Spleen (tissue), 13 donors: ENCODE measurements at regions of chr4 and their contacts with region 1.

Region 1: DNA sequence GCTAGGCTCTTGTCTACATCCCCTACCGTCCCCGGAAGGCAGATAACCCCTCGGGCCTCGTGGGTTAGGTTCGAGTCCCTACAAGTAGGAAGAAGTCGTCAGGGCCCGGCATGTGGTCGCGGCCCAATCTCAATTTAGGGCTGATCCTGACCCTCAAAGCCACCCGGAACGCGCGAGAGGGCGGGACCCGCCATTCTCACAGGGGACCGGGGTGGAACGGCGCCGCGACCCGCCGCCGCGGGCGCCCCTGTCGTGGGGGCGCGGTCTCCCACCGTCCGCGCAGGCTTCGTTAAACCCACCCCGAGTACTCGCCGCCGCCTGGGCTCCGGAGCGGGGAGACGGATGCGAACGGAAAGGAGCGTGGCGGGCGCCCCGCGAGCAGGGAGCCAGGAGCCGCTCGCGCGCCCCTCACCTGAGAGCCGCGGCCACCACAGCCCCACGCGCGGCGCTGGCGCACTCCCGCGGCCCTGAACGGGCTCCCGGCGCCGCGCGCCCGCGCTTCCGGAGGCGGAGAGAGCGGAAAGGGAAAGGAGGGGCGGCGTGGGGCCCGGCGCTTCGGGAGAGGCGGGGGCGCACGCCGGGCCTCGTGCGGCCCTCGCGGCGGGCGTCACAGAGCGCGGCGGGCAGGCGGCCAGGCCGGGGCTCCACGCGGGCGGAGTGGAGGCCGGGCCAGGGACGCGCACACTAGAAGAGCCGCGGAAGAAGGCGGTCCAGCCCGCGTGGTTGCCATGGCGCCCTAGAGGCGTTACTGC is at the start of gene CFAP97:
- DNase-seq: peak; percentile 97
- H3K4me3 ChIP-seq: peak within 1 kb of the TSS; percentile 44 to 91 (median 66)
- H3K27ac ChIP-seq: peak within 1 kb of the TSS; percentile 92 to 99 (median 96)
- H3K4me1 ChIP-seq: peaks cover 9 to 55% (median 48%) of the 10 kb centered on the region in 6 donors
- H3K27me3 ChIP-seq: no peaks in the 10 kb centered on the region
- CTCF ChIP-seq: peak in 2 of 11 experiments; percentile 5
- POLR2A ChIP-seq: peak in 2 of 3 donors; percentile 12 to 70
- total RNA-seq, gene CFAP97: 34.0 to 48.6 (median 40.6) TPM

Region 2: DNA sequence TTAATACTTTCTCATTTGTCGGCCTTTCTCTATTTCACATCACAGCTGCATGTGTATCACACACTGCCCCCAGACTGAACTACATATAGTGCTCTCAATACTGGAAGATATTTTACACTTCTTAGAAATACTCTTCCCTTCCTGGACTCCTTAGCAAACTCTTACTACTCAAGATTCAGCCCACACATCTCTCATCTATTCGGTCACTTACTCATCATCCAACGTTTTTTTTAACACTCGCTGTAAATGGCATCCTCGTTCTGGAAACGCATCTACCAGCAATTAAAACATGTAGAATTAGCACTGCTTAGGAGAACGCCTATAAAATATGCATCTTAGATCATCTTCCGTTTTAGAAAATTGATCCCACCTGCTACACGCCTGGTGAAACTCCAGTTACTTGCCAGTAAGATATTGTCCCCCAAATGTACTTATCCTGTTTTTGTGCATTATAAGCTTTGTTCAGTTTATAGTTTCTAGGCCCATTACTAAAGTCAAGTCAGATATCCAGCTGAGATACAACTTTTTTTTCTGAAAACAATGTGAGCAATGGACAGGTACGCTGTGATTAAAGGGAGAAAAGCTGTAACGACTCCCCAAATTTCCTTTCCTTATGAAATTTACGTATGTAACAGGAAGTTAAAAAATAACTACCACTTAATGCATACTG is 191.0 kb after region 1 on chr4:
- intact Hi-C with region 1: loop called (anchors 5 kb)
- DNase-seq: no peak
- H3K4me3 ChIP-seq: peak overlapping the region; percentile 54 to 83 (median 80)
- H3K27ac ChIP-seq: peak overlapping the region; percentile 95 to 100 (median 99)
- H3K4me1 ChIP-seq: peaks cover 6 to 57% (median 31%) of the 10 kb centered on the region in 6 donors
- H3K27me3 ChIP-seq: no peaks in the 10 kb centered on the region
- CTCF ChIP-seq: no peak
- POLR2A ChIP-seq: no peak